Colonic mucosa (tissue), 4 donors: ENCODE measurements at regions of chr12 and their contacts with region 1.

Region 1: DNA sequence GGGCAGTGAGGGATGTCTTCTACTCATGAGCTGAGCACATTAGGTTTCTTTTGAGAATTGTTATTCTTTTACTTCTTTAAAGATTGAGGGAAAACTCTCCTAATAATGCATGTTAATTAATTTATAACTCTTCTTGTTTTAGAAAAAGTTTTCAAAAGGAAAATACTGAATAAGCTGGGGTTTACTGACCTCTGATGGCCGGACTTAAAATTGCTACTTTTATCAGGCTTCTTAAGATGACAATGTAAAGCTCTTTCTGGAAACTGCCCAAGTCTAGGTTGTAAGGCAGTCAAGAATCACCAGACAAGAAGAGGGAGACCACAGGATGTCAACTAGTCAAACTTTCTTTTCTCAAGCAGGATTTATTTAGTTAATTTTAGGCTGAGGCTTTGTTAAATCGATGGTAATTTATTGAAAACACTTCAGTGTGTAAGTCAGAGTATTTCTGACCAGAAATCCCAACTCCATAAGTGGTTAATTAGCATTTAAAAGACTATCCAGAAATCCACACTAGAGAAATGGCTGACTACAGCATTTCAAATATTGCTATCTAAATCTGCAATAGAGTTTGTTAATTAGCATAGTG is 82.1 kb downstream of the AVPR1A start:
- DNase-seq: no peak
- H3K4me3 ChIP-seq: no peak overlapping the region
- H3K27ac ChIP-seq: no peak overlapping the region
- H3K4me1 ChIP-seq: no peaks in the 10 kb centered on the region
- H3K27me3 ChIP-seq: no peaks in the 10 kb centered on the region
- CTCF ChIP-seq: peak; percentile 25

Region 2: DNA sequence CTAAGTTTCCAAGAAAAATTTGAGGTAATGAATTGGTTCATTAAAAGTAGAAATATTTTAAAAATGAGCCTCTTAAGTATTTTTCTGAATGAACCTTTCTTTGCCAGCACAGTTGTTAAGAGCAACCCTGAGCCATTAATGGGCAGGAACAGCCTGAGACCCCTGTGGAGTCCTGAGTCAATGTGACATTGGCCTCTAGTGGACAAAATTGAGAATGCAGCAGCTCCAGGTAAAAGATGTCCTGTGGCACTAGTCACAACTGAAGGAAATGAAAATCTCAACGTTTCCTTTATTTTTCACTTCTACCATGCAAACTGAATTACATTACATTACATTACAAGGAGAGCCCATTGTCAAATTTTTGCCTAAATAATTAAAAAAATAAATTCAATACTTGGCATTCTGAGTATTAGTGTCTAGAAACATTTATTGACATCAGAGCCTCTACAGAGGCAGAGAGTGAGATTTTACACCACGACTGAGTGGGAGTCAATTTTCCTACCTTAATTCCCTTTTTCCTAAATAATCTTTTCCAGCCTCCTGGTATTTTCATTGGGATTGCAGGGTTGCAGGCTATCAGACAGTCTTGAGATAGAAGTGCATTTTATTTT is 269.7 kb before region 1 on chr12:
- intact Hi-C with region 1: loop called (anchors 10 kb)
- DNase-seq: peak; percentile 69
- H3K4me3 ChIP-seq: no peak overlapping the region
- H3K27ac ChIP-seq: no peak overlapping the region
- H3K4me1 ChIP-seq: no peaks in the 10 kb centered on the region
- H3K27me3 ChIP-seq: no peaks in the 10 kb centered on the region
- CTCF ChIP-seq: peak; percentile 88